Activated T-helper 2 cell treated with anti-CD3 and anti-CD28 coated beads, Interferon-gamma antibody, Interleukin-2, Interleukin-4, amounts not matched to agents 10 μg/mL and 5 μg/mL and 100 μg/mL, durations not matched to agents 14 hours and 24 hours and 36 hours (primary cell): ENCODE measurements at regions of chr4 and their contacts with region 1.

Region 1: DNA sequence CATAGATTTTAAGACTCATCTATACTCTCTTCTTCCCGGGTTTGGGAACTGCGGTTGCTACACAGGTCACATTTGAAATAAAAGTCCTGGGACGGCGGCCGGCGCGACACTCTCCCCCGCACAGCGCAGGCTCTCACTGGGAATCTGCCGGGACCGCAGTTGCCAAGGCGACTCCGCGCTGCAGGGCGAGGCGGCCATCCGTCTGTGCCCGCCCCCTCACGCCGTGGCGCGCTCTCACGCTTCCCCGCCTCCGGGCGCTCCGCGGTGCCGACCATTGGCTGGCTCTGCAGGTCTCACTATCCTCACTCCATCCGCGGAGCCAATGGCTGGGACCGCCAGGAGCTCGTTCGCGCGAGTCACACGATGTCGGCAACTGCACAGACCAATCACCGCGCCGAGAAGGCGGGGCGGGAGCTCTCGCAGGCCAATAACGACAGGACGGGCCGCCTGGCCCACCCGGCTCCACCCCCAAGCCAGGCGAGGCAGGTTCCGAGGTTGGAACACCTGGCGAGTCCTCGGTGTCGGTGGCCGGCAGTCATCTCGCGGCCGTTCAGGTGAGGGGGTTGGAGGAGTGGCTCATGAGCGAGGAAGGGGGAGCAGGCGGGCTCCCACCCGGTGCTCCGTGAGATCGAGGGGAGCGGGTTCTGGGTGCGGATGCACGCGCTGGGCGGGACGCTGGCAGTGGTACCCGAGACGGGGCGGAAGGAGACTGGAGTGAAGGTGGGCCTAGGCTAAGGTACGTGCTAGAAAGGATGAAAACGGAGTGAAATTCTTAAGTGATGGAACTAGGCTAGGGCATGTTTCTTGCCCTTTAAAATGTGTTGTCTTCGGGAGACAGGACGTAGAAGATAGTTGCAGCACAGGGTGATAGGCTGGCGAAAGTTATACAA is at the start of gene MSMO1:
- DNase-seq: peak; percentile 99
- H3K4me3 Mint-ChIP-seq: no peak within 1 kb of the TSS
- H3K27ac Mint-ChIP-seq: no peak within 1 kb of the TSS
- H3K4me1 Mint-ChIP-seq: peaks cover 41% of the 10 kb centered on the region
- H3K27me3 Mint-ChIP-seq: no peaks in the 10 kb centered on the region
- total RNA-seq, gene MSMO1: 105 and 110 TPM in 2 replicates

Region 2: DNA sequence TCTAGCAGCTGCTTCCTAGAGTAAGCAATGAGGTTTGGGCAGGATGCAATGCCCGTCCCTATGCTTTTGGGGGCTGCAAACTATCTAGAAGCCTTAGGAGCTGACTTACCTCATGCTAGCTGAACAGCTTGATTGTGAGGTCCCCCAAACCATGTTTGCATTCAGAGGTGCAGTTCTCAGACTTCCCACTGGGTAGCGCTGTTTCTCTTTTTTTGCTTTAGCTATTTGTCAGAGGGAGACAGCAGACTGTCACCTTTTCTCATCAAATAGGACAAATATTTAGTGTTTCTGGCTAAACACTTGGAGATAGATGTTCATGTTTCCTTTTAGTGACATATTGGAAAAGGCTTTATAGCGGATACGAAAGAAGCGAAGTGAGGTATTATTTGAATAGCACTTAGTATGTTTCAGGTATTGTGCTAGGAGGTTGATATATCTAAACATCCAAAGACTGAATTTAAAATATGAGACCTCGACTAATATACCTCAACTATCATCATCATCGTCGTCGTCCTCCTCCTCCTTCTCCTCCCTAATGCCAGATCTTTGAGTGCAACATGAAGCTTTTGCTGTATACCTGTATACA is 196.1 kb before region 1 on chr4:
- intact Hi-C with region 1: loop called (anchors 5 kb)
- DNase-seq: peak; percentile 59
- H3K4me3 Mint-ChIP-seq: no peak overlapping the region
- H3K27ac Mint-ChIP-seq: no peak overlapping the region
- H3K4me1 Mint-ChIP-seq: peaks cover 12% of the 10 kb centered on the region
- H3K27me3 Mint-ChIP-seq: peaks cover 21% of the 10 kb centered on the region

Region 3: GRCh38 chr4:165248102-165248501 is 79.4 kb before region 1 on chr4:
- intact Hi-C with region 1: loop called (anchors 5 kb)
- DNase-seq: no peak
- H3K4me3 Mint-ChIP-seq: no peak overlapping the region
- H3K27ac Mint-ChIP-seq: no peak overlapping the region
- H3K4me1 Mint-ChIP-seq: peaks cover 10% of the 10 kb centered on the region
- H3K27me3 Mint-ChIP-seq: no peaks in the 10 kb centered on the region

Region 4: DNA sequence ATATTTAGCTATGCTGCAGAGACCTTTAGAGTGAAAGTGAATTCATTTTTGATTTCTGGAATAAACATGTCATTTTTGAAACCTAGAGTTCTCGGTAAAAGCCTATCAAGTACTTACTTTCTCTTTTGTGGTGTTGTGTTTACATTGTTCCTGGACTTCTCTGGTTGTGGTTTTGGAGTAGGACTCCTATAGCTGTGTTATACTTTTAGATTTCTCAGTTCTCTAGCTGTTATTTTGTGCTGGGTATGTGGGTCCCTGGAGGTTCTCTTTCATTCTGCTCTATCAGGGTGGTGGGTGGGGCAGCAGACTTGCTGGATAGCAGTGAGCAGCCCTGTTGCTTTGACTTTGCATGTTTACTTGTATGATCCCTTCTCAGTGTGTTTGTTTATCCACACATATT is 25.6 kb before region 1 on chr4:
- intact Hi-C with region 1: loop called (anchors 1 kb)
- DNase-seq: no peak
- H3K4me3 Mint-ChIP-seq: peak overlapping the region; percentile 78
- H3K27ac Mint-ChIP-seq: peak overlapping the region; percentile 79
- H3K4me1 Mint-ChIP-seq: peaks cover 25% of the 10 kb centered on the region
- H3K27me3 Mint-ChIP-seq: no peaks in the 10 kb centered on the region

Region 5: GRCh38 chr4:165364452-165365080 is 37.1 kb after region 1 on chr4:
- intact Hi-C with region 1: no loop called
- DNase-seq: no peak
- H3K4me3 Mint-ChIP-seq: no peak overlapping the region
- H3K27ac Mint-ChIP-seq: no peak overlapping the region
- H3K4me1 Mint-ChIP-seq: peaks cover 4% of the 10 kb centered on the region
- H3K27me3 Mint-ChIP-seq: peaks cover 20% of the 10 kb centered on the region

Region 6: DNA sequence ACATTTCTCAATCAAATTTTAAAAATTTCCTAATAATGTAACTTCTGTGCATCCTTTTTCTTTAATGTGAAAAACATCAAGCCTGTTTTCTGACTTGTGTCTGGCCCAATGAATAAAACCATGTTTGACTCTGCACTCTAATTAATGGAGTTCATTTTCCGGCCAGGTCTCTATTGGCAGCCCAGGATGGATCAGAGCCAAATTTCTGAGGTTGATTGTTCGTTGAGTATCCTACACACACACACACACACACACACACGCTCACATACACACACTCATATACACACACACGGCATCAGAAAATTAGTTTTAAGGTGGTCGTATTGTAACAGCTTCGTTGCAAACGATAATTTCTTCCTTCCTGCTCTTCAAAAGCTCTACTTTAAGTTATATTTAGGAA is 516.7 kb after region 1 on chr4:
- intact Hi-C with region 1: no loop called
- DNase-seq: no peak
- H3K4me3 Mint-ChIP-seq: no peak overlapping the region
- H3K27ac Mint-ChIP-seq: no peak overlapping the region
- H3K4me1 Mint-ChIP-seq: no peaks in the 10 kb centered on the region
- H3K27me3 Mint-ChIP-seq: no peaks in the 10 kb centered on the region